Heart left ventricle (tissue), 16 donors: ENCODE measurements at regions of chr20 and their contacts with region 1.

Region 1: DNA sequence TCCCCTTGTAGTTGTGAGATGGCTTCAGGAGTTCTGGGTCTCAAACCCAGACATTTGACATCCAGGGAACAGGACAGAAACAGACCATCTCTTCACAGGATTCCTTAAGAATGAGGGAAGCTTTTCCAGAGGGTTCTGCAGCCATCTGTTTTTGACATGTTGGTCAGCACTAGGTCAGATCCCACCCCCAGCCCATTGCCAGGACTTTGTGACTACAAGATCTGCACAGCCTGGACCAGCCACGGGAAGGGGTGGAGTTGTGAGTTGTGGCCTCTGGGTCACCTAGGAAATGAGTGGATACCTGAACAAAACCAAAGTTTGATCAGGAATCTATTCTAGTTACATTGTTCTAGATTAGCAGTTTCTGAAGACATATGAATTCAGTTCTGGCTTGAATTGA is 39.2 kb upstream of the SSTR4 start:
- DNase-seq: no peak
- ATAC-seq: peak in 2 of 4 donors; percentile 43 to 75
- H3K4me3 ChIP-seq: no peak overlapping the region
- H3K27ac ChIP-seq: no peak overlapping the region
- H3K4me1 ChIP-seq: peaks cover 0 to 7% (median 0%) of the 10 kb centered on the region in 12 donors
- H3K27me3 ChIP-seq: no peaks in the 10 kb centered on the region
- CTCF ChIP-seq: no peak
- POLR2A ChIP-seq: no peak

Region 2: DNA sequence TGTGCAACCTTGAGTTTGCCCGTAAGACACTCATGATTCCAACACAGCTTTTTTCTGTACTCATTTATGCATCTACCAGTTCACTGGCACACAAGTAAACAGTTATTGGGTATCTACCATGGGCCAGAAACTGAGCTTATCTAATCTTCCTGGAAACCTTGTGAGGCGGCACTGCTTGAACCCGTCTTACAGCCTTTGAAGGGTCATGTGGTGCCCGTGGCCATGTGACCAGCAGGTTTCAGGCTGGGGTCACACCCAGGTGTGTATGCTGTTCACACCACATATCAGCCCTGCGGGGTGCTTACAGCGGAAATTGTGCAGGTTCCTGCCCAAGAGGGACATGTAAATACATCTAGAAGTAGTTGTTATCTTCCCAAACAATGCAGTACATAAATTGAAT is 47.5 kb after region 1 on chr20:
- intact Hi-C with region 1: loop called in 1 of 10 experiments (anchors 2 kb)
- DNase-seq: no peak
- ATAC-seq: no peak
- H3K4me3 ChIP-seq: no peak overlapping the region
- H3K27ac ChIP-seq: no peak overlapping the region
- H3K4me1 ChIP-seq: peaks cover 0 to 34% (median 16%) of the 10 kb centered on the region in 12 donors
- H3K27me3 ChIP-seq: peaks cover 0 to 49% (median 14%) of the 10 kb centered on the region in 9 donors
- CTCF ChIP-seq: no peak
- POLR2A ChIP-seq: no peak